H1 (cell line): ENCODE measurements at regions of chr10 and their contacts with region 1.

Region 1: GRCh38 chr10:86585037-86585725 is 63.6 kb upstream of the WAPL start:
- DNase-seq: peak; percentile 67 to 91
- H3K4me3 ChIP-seq: no peak overlapping the region
- H3K27ac ChIP-seq: no peak overlapping the region
- H3K4me1 ChIP-seq: peaks cover 0 to 2% (median 0%) of the 10 kb centered on the region in 4 experiments; a peak in 1 of 7 replicates
- H3K27me3 ChIP-seq: 0 out of 7 replicates have a peak, but pooled peaks cover 0 to 3% (median 0%) of the 10 kb centered on the region in 4 experiments
- CTCF ChIP-seq: peak; percentile 92 to 97 (median 93)
- EP300 ChIP-seq: no peak
- POLR2A ChIP-seq: no peak
- RAD21 ChIP-seq: peak; percentile 97 to 98

Region 2: DNA sequence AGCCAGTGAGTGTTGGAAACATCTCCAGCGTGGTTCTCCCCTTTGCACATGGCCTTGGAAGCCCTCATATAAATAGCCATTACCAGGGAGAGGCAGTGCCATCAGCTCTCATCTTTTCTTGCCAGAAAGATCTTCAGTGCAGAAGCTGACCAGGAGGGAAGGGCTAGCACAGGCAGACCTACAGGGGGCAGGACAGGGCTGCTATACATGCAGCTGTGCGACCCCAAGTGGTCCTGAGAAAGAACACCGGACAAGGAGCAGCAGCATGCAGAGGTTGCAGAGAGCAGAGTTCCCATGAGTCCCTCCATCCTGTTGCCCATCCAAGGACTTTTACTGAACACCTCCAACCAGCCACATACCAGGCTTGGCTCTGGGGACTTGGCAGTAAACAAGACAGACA is 235.7 kb before region 1 on chr10:
- CTCF ChIA-PET with region 1: interaction called, 10 read pairs
- POLR2A ChIA-PET with region 1: no interaction called
- DNase-seq: peak; percentile 56 to 63
- H3K4me3 ChIP-seq: no peak overlapping the region
- H3K27ac ChIP-seq: no peak overlapping the region
- H3K4me1 ChIP-seq: peaks cover 0 to 2% (median 0%) of the 10 kb centered on the region in 4 experiments; a peak in 1 of 7 replicates
- H3K27me3 ChIP-seq: no peaks in the 10 kb centered on the region
- CTCF ChIP-seq: peak; percentile 99 to 100 (median 100)
- EP300 ChIP-seq: no peak
- POLR2A ChIP-seq: no peak
- RAD21 ChIP-seq: peak; percentile 81 to 87

Region 3: GRCh38 chr10:86399879-86400704 is 185.1 kb before region 1 on chr10:
- CTCF ChIA-PET with region 1: interaction called, 61 read pairs
- POLR2A ChIA-PET with region 1: interaction called, 3 read pairs
- DNase-seq: peak; percentile 94 to 99
- H3K4me3 ChIP-seq: peak overlapping the region; percentile 33 to 71 (median 62)
- H3K27ac ChIP-seq: no peak overlapping the region
- H3K4me1 ChIP-seq: peaks cover 0 to 7% (median 5%) of the 10 kb centered on the region in 4 experiments; a peak in 6 of 7 replicates
- H3K27me3 ChIP-seq: peaks cover 8 to 34% (median 31%) of the 10 kb centered on the region in 4 experiments
- CTCF ChIP-seq: peak; percentile 81 to 92 (median 88)
- EP300 ChIP-seq: 0 out of 3 replicates have a peak, but pooled peaks of 1 of the 2 experiments have one; percentile 7
- POLR2A ChIP-seq: no peak; a peak in 1 of 3 replicates
- RAD21 ChIP-seq: peak; percentile 87 to 91

Region 4: DNA sequence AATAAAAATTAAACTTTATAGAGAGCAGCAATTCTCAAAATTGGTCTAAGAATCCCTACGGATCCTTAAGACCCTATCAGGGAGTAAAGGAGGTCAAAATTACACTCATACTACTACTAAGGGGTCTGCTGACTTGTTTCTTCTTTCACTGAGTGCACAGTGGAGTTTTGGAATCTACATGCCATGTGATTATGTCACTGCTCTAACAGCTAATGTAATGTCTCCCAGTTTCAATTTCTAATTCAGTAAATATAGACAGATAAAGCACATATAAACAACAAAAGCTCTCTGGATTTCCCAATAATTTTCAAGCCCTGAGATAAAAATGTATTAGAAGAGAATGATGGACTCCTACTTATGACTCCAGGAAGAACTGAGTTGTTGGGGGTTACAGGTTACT is 138.2 kb before region 1 on chr10:
- CTCF ChIA-PET with region 1: no interaction called
- POLR2A ChIA-PET with region 1: no interaction called
- DNase-seq: no peak
- H3K4me3 ChIP-seq: no peak overlapping the region
- H3K27ac ChIP-seq: no peak overlapping the region
- H3K4me1 ChIP-seq: no peaks in the 10 kb centered on the region
- H3K27me3 ChIP-seq: no peaks in the 10 kb centered on the region
- CTCF ChIP-seq: no peak
- EP300 ChIP-seq: no peak
- POLR2A ChIP-seq: no peak
- RAD21 ChIP-seq: no peak

Region 5: DNA sequence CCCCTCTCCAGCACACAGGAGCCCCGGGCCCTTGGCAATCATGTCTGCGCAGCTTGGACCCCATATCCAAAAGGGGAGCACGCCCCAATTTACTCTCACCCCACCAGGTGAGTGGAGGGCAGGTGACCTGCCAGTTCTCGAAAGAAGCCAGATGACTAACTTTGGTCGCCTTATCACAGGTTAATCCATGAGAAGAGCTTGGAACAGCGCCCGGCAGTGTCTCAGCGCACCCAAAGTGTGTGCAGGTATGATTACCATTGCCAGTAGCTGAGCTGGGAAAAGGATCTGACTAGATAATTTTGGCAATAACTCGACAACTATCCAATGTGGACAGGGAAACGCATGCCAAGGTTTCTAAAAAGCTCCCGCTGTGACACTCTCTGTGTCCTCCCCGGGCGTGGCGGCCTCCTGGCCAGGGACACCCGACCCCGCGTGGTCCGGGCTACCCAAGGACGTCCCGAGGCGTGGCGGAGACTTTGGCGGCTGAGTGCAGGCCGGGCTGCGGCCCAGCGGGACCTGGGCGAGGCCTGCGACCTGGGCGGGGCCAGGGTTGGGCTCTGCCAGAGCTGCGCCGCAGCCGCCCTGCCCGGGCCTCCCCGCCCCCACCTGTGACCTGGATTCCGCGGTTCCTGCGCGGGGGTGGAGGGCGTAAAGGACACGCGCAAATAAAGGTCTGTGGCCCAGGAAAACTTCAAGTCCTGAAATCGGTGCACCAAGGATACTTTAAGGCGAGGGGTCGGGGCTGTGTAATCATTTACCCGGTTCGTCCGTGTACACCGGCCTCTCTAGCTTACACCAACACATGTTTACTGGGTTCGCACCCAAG is 49.9 kb before region 1 on chr10:
- CTCF ChIA-PET with region 1: interaction called, 15 read pairs
- POLR2A ChIA-PET with region 1: no interaction called
- DNase-seq: peak in 1 of 2 experiments; percentile 88
- H3K4me3 ChIP-seq: peak overlapping the region; percentile 78 to 86 (median 80)
- H3K27ac ChIP-seq: no peak overlapping the region
- H3K4me1 ChIP-seq: peaks cover 6 to 22% (median 15%) of the 10 kb centered on the region in 4 experiments
- H3K27me3 ChIP-seq: peaks cover 0 to 21% (median 10%) of the 10 kb centered on the region in 4 experiments; a peak in 5 of 7 replicates
- CTCF ChIP-seq: no peak
- EP300 ChIP-seq: no peak
- POLR2A ChIP-seq: no peak; a peak in 1 of 3 replicates
- RAD21 ChIP-seq: no peak

Region 6: DNA sequence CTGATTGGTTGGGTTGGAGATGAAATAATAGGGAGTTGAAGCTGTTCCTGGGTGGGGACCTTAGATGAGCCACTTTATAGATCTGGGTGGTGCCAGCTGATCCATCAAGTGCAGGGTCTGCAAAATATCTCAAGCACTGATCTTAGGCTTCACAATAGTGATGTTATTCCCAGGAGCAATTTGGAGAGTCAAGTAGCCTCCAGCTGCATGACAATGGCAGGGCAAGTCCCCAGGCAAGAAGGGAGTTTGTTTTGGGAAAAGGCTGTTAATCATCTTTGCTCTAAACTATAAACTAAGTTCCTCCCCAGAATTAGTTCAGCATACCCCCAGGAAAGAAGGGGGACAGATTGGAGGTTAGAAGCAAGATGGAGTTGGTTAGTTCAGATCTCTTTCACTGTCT is 15.8 kb before region 1 on chr10:
- CTCF ChIA-PET with region 1: interaction called, 44 read pairs
- POLR2A ChIA-PET with region 1: interaction called, 4 read pairs
- DNase-seq: no peak
- H3K4me3 ChIP-seq: no peak overlapping the region
- H3K27ac ChIP-seq: no peak overlapping the region
- H3K4me1 ChIP-seq: peaks cover 0 to 9% (median 2%) of the 10 kb centered on the region in 4 experiments; a peak in 4 of 7 replicates
- H3K27me3 ChIP-seq: no peaks in the 10 kb centered on the region
- CTCF ChIP-seq: no peak
- EP300 ChIP-seq: no peak
- POLR2A ChIP-seq: no peak
- RAD21 ChIP-seq: no peak

Region 7: DNA sequence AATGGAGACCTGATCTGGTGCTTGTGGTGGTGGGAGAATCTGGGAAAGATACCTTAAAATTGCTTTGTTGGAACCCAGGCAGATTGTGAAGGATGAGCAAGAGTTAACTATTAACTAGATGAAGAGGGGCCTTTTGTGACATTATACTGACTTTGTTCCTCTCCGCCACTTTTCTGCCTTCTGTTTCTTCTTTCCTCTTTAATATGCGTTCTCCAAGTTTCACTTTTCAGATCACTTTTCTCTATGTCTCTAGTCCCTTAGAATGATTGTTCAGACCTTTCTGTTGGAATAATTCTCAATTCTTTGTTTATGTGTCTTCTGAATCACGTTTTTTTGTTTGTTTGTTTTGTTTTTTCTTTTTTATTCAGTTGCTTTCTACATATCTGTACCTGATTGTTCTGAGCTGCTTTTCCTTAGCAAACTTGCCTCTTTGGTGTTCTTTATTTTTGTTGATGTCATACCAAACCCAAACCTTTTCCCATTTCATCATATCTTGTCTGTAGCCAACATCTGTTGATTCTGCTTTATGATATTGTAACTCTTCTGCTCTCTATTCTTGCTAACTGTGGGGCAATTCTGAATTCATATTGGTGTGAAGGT is 174.0 kb after region 1 on chr10:
- CTCF ChIA-PET with region 1: no interaction called
- POLR2A ChIA-PET with region 1: no interaction called
- DNase-seq: no peak
- H3K4me3 ChIP-seq: peak overlapping the region; percentile 79 to 99 (median 88)
- H3K27ac ChIP-seq: no peak overlapping the region
- H3K4me1 ChIP-seq: peaks cover 0 to 9% (median 8%) of the 10 kb centered on the region in 4 experiments; a peak in 6 of 7 replicates
- H3K27me3 ChIP-seq: no peaks in the 10 kb centered on the region
- CTCF ChIP-seq: no peak
- EP300 ChIP-seq: no peak
- POLR2A ChIP-seq: no peak
- RAD21 ChIP-seq: no peak